ENCODE measurements at regions of chr1 and their contacts with region 1.

Region 1: DNA sequence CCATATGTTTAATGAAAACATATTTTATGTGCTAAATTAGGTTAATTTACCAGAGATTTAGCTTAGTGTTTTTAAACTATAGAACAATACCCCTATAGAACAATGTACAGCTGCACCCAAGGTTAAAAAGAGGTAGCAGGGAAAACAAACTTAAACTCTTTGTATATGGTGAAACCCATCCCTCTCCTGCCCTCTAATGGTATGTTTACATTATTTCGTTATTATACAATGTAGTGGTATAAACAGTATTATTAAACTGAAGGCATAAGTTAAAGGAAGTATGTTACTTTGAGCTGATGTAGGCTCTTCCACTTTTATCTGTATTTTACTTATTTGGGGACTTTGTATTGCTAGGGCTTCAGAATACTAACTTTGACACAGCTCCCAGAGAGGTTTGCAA is 16.7 kb upstream of the ZYG11A start:
- DNase-seq: no peak
- CTCF ChIP-seq: peak; percentile 28

Region 2: DNA sequence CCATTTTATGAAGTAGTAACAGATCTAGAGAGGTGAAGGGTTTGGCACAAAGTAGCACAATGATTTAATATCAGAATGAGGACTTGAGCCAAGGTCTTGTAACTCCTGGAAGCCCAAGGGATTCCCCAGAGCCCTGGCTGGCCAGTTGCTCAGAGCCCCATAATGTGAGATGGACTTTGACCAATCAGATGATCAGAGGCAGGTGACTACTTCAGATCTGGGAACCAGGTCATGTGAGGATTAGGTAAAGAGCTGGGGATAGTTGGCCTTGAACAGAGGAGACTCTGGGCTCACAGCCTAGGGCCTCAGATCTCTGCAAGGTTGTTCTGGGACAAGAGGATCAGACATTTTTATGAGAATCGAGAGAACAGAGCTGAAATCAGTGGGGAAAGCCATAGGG is 174.0 kb before region 1 on chr1:
- CTCF ChIA-PET with region 1: no interaction called
- POLR2A ChIA-PET with region 1: no interaction called
- DNase-seq: no peak
- CTCF ChIP-seq: no peak

Region 3: DNA sequence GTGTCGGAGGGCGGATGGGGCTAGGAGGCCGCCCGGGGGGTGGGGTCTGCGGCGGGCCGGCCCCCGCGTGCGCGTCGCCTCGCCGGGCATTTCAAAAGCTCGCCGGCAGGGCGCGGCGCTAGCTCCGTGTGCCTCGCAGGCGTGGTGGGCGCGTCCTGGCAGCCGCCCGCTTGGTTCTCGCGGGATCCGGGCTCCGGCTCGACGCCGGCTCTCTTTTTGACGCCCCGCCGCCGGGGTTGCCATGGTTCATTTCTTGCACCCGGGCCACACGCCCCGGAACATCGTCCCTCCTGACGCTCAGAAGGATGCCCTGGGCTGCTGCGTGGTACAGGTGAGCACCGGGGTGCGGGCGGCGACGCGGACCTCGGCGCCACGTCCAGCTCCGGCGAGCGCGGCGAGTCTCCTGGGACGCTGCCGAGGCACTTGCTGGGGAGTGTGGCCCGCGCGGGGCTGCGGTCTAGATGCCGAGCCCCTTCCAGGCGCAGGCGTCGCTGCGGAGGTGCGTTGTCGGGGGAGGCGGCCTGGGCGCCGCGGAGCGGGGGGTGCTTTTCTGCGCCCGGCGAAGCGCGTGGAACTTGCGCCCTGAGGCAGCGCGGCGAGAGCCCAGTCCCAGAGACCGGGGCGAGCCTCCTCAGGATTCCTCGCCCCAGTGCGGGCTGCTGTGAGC is 16.9 kb after region 1 on chr1 and contains the start of gene ZYG11A:
- CTCF ChIA-PET with region 1: interaction called, 12 read pairs
- POLR2A ChIA-PET with region 1: interaction called, 3 read pairs
- DNase-seq: peak; percentile 94
- CTCF ChIP-seq: peak; percentile 38

Measured in GM10248 (cell line).